Activated naive CD4-positive, alpha-beta T cell treated with anti-CD3 and anti-CD28 coated beads for 36 hours (primary cell): ENCODE measurements at regions of chr15 and their contacts with region 1.

Region 1: GRCh38 chr15:82046666-82047452 is 1.0 kb upstream of the MEX3B start:
- DNase-seq: peak; percentile 93
- H3K4me3 Mint-ChIP-seq: peak overlapping the region; percentile 84
- H3K27ac Mint-ChIP-seq: peak overlapping the region; percentile 74
- H3K4me1 Mint-ChIP-seq: peaks cover 10% of the 10 kb centered on the region
- H3K27me3 Mint-ChIP-seq: peaks cover 29% of the 10 kb centered on the region

Region 2: GRCh38 chr15:80989518-80990478 is 1057.1 kb before region 1 on chr15 and contains the start of gene MESD:
- CTCF ChIA-PET with region 1: no interaction called
- intact Hi-C with region 1: loop called (anchors 5 kb)
- DNase-seq: peak; percentile 99
- H3K4me3 Mint-ChIP-seq: peak within 1 kb of the TSS; percentile 99
- H3K27ac Mint-ChIP-seq: peak within 1 kb of the TSS; percentile 97
- H3K4me1 Mint-ChIP-seq: peaks cover 57% of the 10 kb centered on the region
- H3K27me3 Mint-ChIP-seq: no peaks in the 10 kb centered on the region
- total RNA-seq, gene MESD: 12.5 to 15.1 TPM

Region 3: GRCh38 chr15:81296673-81297072 is 750.2 kb before region 1 on chr15:
- CTCF ChIA-PET with region 1: no interaction called
- intact Hi-C with region 1: loop called (anchors 2 kb)
- DNase-seq: peak; percentile 90
- H3K4me3 Mint-ChIP-seq: peak overlapping the region; percentile 93
- H3K27ac Mint-ChIP-seq: peak overlapping the region; percentile 99
- H3K4me1 Mint-ChIP-seq: peaks cover 66% of the 10 kb centered on the region
- H3K27me3 Mint-ChIP-seq: no peaks in the 10 kb centered on the region

Region 4: GRCh38 chr15:81480645-81481053 is 566.2 kb before region 1 on chr15:
- CTCF ChIA-PET with region 1: no interaction called
- intact Hi-C with region 1: loop called (anchors 1 kb)
- DNase-seq: peak; percentile 8
- H3K4me3 Mint-ChIP-seq: no peak overlapping the region
- H3K27ac Mint-ChIP-seq: no peak overlapping the region
- H3K4me1 Mint-ChIP-seq: no peaks in the 10 kb centered on the region
- H3K27me3 Mint-ChIP-seq: peaks cover 2% of the 10 kb centered on the region

Region 5: GRCh38 chr15:83066734-83067637 is 1020.1 kb after region 1 on chr15 and contains the start of gene BTBD1:
- CTCF ChIA-PET with region 1: no interaction called
- intact Hi-C with region 1: loop called (anchors 2 kb)
- DNase-seq: peak; percentile 92
- H3K4me3 Mint-ChIP-seq: peak within 1 kb of the TSS; percentile 84
- H3K27ac Mint-ChIP-seq: peak within 1 kb of the TSS; percentile 83
- H3K4me1 Mint-ChIP-seq: peaks cover 22% of the 10 kb centered on the region
- H3K27me3 Mint-ChIP-seq: no peaks in the 10 kb centered on the region
- total RNA-seq, gene BTBD1: 45.2 to 46.1 TPM